Naive thymus-derived CD4-positive, alpha-beta T cell (primary cell): ENCODE measurements at regions of chr11 and their contacts with region 1.

Region 1: GRCh38 chr11:58579192-58580129 is 598 bp downstream of the ZFP91 start:
- DNase-seq: peak; percentile 85 to 93 (median 90)
- ATAC-seq: peak; percentile 60
- H3K4me3 ChIP-seq: peak overlapping the region; percentile 85
- H3K4me3 Mint-ChIP-seq: peak overlapping the region; percentile 95 to 100 (median 98)
- H3K27ac ChIP-seq: peak overlapping the region; percentile 98
- H3K27ac Mint-ChIP-seq: peak overlapping the region; percentile 98 to 100 (median 100)
- H3K4me1 ChIP-seq: peaks cover 42 to 58% of the 10 kb centered on the region in 2 donors
- H3K4me1 Mint-ChIP-seq: peaks cover 27 to 80% (median 70%) of the 10 kb centered on the region in 7 donors
- H3K27me3 ChIP-seq: no peaks in the 10 kb centered on the region
- H3K27me3 Mint-ChIP-seq: peaks cover 0 to 5% (median 0%) of the 10 kb centered on the region in 5 donors

Region 2: GRCh38 chr11:57426929-57427726 is 1152.3 kb before region 1 on chr11 and contains the start of gene SLC43A3:
- CTCF ChIA-PET with region 1: no interaction called
- POLR2A ChIA-PET with region 1: no interaction called
- intact Hi-C with region 1: loop called (anchors 2 to 10 kb)
- DNase-seq: peak; percentile 18 to 79 (median 38)
- ATAC-seq: peak; percentile 63
- H3K4me3 ChIP-seq: peak within 1 kb of the TSS; percentile 56
- H3K4me3 Mint-ChIP-seq: peak within 1 kb of the TSS; percentile 83 to 92 (median 89)
- H3K27ac ChIP-seq: peak within 1 kb of the TSS; percentile 62
- H3K27ac Mint-ChIP-seq: peak within 1 kb of the TSS; percentile 52 to 93 (median 82)
- H3K4me1 ChIP-seq: peaks cover 24 to 36% of the 10 kb centered on the region in 2 donors
- H3K4me1 Mint-ChIP-seq: peaks cover 40 to 55% (median 50%) of the 10 kb centered on the region in 7 donors
- H3K27me3 ChIP-seq: no peaks in the 10 kb centered on the region
- H3K27me3 Mint-ChIP-seq: peaks cover 0 to 24% (median 0%) of the 10 kb centered on the region in 5 donors
- total RNA-seq, gene SLC43A3: 10.5 to 67.9 (median 12.2) TPM

Region 3: GRCh38 chr11:57657194-57658022 is 922.1 kb before region 1 on chr11 and contains the start of gene CLP1:
- CTCF ChIA-PET with region 1: no interaction called
- POLR2A ChIA-PET with region 1: no interaction called
- intact Hi-C with region 1: loop called (anchors 1 kb)
- DNase-seq: peak; percentile 87 to 99 (median 98)
- ATAC-seq: peak; percentile 99
- H3K4me3 ChIP-seq: peak within 1 kb of the TSS; percentile 64
- H3K4me3 Mint-ChIP-seq: peak within 1 kb of the TSS; percentile 89 to 100 (median 94)
- H3K27ac ChIP-seq: peak within 1 kb of the TSS; percentile 92
- H3K27ac Mint-ChIP-seq: peak within 1 kb of the TSS; percentile 88 to 98 (median 94)
- H3K4me1 ChIP-seq: peaks cover 4 to 10% of the 10 kb centered on the region in 2 donors
- H3K4me1 Mint-ChIP-seq: peaks cover 8 to 45% (median 36%) of the 10 kb centered on the region in 7 donors
- H3K27me3 ChIP-seq: no peaks in the 10 kb centered on the region
- H3K27me3 Mint-ChIP-seq: no peaks in the 10 kb centered on the region
- total RNA-seq, gene CLP1: 12.8 to 18.5 (median 14.7) TPM

Region 4: DNA sequence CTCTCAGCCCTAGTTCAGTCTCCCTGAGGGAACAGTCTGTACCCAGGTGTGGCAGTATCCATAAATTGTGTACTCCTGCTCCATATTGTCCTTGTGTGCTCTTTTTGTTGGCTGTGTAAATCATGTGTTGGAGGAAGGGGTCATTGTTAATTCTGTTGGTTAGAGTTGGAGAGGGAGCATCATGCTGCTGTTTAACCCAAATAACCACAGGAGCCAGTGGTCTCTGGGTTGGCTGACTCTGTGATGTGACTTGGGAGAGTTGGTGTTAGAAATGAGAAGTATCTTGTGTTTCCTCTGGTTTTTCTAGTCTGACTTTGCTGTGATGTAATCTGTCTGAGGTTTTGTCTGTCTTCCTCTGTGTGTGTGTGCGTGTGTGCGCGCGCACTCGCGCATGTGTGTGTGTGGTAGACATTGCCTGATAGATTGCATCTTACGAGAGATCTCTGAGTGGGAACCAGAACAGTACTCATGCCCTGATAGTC is 787.4 kb before region 1 on chr11:
- CTCF ChIA-PET with region 1: interaction called, 3 read pairs
- POLR2A ChIA-PET with region 1: interaction called, 3 read pairs
- intact Hi-C with region 1: loop called (anchors 1 kb)
- DNase-seq: peak; percentile 69 to 93 (median 90)
- ATAC-seq: peak; percentile 96
- H3K4me3 ChIP-seq: peak overlapping the region; percentile 15
- H3K4me3 Mint-ChIP-seq: peak overlapping the region; percentile 55 to 88 (median 77)
- H3K27ac ChIP-seq: peak overlapping the region; percentile 83
- H3K27ac Mint-ChIP-seq: peak overlapping the region; percentile 90 to 99 (median 99)
- H3K4me1 ChIP-seq: peaks cover 21 to 29% of the 10 kb centered on the region in 2 donors
- H3K4me1 Mint-ChIP-seq: peaks cover 37 to 53% (median 44%) of the 10 kb centered on the region in 7 donors
- H3K27me3 ChIP-seq: no peaks in the 10 kb centered on the region
- H3K27me3 Mint-ChIP-seq: peaks cover 0 to 2% (median 0%) of the 10 kb centered on the region in 5 donors

Region 5: DNA sequence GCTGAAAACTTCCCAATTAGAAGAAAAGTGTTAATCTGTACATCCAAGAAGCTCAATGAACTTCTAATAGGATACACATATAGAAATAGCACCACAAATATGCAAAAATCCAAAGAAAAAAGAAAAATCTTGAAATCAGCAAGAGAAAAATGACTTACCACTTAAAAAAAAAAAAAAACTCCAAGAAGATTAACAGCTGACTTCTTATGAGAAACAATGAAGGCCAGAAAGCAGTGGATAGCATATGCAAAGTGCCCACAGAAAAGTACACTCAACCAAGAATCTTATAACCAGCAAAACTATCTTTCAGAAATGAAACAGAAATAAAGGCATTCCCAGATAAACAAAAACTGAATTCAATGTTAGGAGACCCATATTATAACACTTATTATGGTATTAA is 107.6 kb before region 1 on chr11:
- CTCF ChIA-PET with region 1: no interaction called
- POLR2A ChIA-PET with region 1: no interaction called
- intact Hi-C with region 1: no loop called
- DNase-seq: no peak
- ATAC-seq: no peak
- H3K4me3 ChIP-seq: no peak overlapping the region
- H3K4me3 Mint-ChIP-seq: no peak overlapping the region
- H3K27ac ChIP-seq: no peak overlapping the region
- H3K27ac Mint-ChIP-seq: no peak overlapping the region
- H3K4me1 ChIP-seq: no peaks in the 10 kb centered on the region
- H3K4me1 Mint-ChIP-seq: no peaks in the 10 kb centered on the region
- H3K27me3 ChIP-seq: no peaks in the 10 kb centered on the region
- H3K27me3 Mint-ChIP-seq: peaks cover 0 to 43% (median 23%) of the 10 kb centered on the region in 5 donors

Region 6: GRCh38 chr11:58592760-58593472 is 13.5 kb after region 1 on chr11:
- CTCF ChIA-PET with region 1: interaction called, 7 read pairs
- POLR2A ChIA-PET with region 1: interaction called, 4 read pairs
- intact Hi-C with region 1: loop called in 1 of 2 experiments (anchors 1 kb)
- DNase-seq: peak in 1 of 9 donors; percentile 31
- ATAC-seq: peak; percentile 37
- H3K4me3 ChIP-seq: no peak overlapping the region
- H3K4me3 Mint-ChIP-seq: peak overlapping the region in 2 of 10 donors; percentile 5 to 24
- H3K27ac ChIP-seq: no peak overlapping the region
- H3K27ac Mint-ChIP-seq: peak overlapping the region in 8 of 9 donors; percentile 3 to 60 (median 43)
- H3K4me1 ChIP-seq: peaks cover 0 to 26% of the 10 kb centered on the region in 2 donors
- H3K4me1 Mint-ChIP-seq: peaks cover 39 to 96% (median 88%) of the 10 kb centered on the region in 7 donors
- H3K27me3 ChIP-seq: no peaks in the 10 kb centered on the region
- H3K27me3 Mint-ChIP-seq: no peaks in the 10 kb centered on the region

Region 7: GRCh38 chr11:59106363-59107336 is 527.2 kb after region 1 on chr11 and contains the start of gene FAM111B:
- CTCF ChIA-PET with region 1: no interaction called
- POLR2A ChIA-PET with region 1: no interaction called
- intact Hi-C with region 1: loop called in 1 of 2 experiments (anchors 1 kb)
- DNase-seq: peak; percentile 10 to 76 (median 39)
- ATAC-seq: peak; percentile 85
- H3K4me3 ChIP-seq: peak within 1 kb of the TSS; percentile 65
- H3K4me3 Mint-ChIP-seq: peak within 1 kb of the TSS; percentile 71 to 92 (median 83)
- H3K27ac ChIP-seq: no peak within 1 kb of the TSS
- H3K27ac Mint-ChIP-seq: peak within 1 kb of the TSS in 3 of 9 donors; percentile 13 to 83 (median 49)
- H3K4me1 ChIP-seq: peaks cover 12% of the 10 kb centered on the region in 2 donors
- H3K4me1 Mint-ChIP-seq: peaks cover 13 to 79% (median 26%) of the 10 kb centered on the region in 7 donors
- H3K27me3 ChIP-seq: peaks cover 0 to 5% of the 10 kb centered on the region in 2 donors
- H3K27me3 Mint-ChIP-seq: peaks cover 0 to 38% (median 34%) of the 10 kb centered on the region in 5 donors
- total RNA-seq, gene FAM111B: 0.11 to 79.8 (median 0.42) TPM in 4 of 5 experiments, not detected in the other

Region 8: DNA sequence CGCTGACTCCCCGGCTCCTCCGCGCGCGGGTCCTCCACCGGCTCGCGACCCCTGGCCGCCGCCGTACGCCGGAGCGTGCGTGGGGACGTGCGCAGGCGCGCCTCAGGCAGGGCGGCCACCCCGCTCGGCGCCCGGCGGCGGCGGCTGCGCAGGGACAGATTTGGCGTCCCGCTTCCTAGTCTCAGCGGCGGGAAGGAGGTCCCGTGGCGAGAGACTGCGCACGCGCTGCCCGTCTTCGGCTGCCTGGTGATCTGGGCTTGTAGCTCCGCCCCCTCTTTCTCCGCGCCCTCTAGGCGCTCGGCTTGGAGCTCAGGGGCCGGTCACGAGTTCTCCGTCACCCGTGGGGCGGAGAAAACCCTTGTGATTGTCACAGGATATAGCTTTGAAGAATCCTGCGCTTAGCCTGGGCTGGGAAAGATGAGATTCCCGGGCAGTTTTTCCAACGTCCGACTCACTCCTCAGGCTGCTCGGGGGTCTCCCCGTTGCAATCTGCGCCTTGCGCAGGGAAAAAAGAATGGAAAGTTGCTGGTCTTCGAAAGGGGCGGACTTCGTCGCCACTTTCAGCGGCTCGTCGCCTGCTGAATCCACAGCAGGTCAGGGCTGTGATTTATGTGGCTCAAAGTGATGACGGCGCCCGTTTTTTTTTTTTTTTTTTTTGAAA is 1089.6 kb after region 1 on chr11 and contains the start of gene PATL1:
- CTCF ChIA-PET with region 1: no interaction called
- POLR2A ChIA-PET with region 1: no interaction called
- intact Hi-C with region 1: loop called (anchors 1 kb)
- DNase-seq: peak; percentile 96 to 100 (median 99)
- ATAC-seq: peak; percentile 94
- H3K4me3 ChIP-seq: peak within 1 kb of the TSS; percentile 94
- H3K4me3 Mint-ChIP-seq: peak within 1 kb of the TSS; percentile 83 to 100 (median 96)
- H3K27ac ChIP-seq: peak within 1 kb of the TSS; percentile 98
- H3K27ac Mint-ChIP-seq: peak within 1 kb of the TSS; percentile 97 to 100 (median 99)
- H3K4me1 ChIP-seq: peaks cover 17 to 23% of the 10 kb centered on the region in 2 donors
- H3K4me1 Mint-ChIP-seq: peaks cover 32 to 50% (median 41%) of the 10 kb centered on the region in 7 donors
- H3K27me3 ChIP-seq: no peaks in the 10 kb centered on the region
- H3K27me3 Mint-ChIP-seq: peaks cover 0 to 2% (median 0%) of the 10 kb centered on the region in 5 donors
- total RNA-seq, gene PATL1: 40.6 to 60.1 (median 45.3) TPM